ENCODE measurements at regions of chr9 and their contacts with region 1.

Region 1: GRCh38 chr9:75847085-75847484 is 43.4 kb upstream of the PCSK5 start:
- DNase-seq: no peak
- H3K4me3 Mint-ChIP-seq: no peak overlapping the region
- H3K27ac Mint-ChIP-seq: no peak overlapping the region
- H3K4me1 Mint-ChIP-seq: no peaks in the 10 kb centered on the region
- H3K27me3 Mint-ChIP-seq: no peaks in the 10 kb centered on the region

Region 2: DNA sequence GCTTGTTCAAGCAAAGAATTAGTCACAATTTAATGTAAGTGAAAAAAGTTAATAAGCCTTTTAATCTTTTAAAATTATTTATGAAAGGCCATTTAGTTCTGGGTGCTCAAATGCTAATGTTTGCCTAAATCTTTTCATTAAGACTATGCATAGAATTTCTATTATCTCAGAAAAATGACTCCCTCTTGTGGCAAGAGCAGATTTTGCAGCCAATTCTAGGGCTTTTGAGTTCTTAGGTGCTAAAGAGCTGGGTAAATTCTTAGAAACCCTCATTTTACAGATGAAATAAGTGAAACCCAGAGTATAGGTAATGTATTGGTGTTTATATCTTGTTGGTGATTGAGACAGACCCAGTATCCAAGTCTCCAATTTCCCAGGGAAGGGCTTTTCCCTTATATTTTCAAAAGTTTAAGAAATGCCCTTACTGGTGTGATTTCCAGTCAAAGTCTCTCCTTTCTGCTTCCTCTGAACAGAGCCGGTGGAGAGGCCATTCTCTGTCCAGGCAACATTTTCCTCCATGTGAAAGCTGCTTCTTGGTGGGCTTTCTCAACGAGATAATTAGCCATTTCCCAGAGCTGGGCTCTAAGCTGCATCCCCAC is 19.3 kb after region 1 on chr9:
- CTCF ChIA-PET with region 1: interaction called, 13 read pairs
- POLR2A ChIA-PET with region 1: no interaction called
- DNase-seq: peak; percentile 19
- H3K4me3 Mint-ChIP-seq: no peak overlapping the region
- H3K27ac Mint-ChIP-seq: no peak overlapping the region
- H3K4me1 Mint-ChIP-seq: no peaks in the 10 kb centered on the region
- H3K27me3 Mint-ChIP-seq: no peaks in the 10 kb centered on the region

Region 3: DNA sequence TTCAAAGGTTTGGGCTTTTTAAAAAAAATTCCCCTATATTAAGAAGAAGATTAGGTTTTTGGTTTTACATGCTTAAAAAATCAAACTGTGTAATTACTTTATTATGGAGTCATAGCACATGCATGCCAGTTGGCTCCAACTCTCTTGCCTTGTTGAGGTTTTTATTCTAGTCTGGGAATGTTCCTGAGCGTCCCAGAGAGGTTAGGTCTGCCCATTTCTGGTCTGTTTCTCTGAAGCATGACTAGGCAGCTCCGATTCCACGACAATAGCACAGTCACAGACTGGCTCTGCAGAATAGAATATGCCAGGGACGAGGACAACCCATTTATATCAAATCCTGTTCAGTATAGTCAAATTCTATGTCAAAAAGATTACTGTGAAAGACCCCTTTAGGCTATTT is 260.4 kb after region 1 on chr9:
- CTCF ChIA-PET with region 1: no interaction called
- POLR2A ChIA-PET with region 1: no interaction called
- DNase-seq: no peak
- H3K4me3 Mint-ChIP-seq: no peak overlapping the region
- H3K27ac Mint-ChIP-seq: no peak overlapping the region
- H3K4me1 Mint-ChIP-seq: no peaks in the 10 kb centered on the region
- H3K27me3 Mint-ChIP-seq: no peaks in the 10 kb centered on the region